SK-N-SH (cell line): ENCODE measurements at regions of chr10 and their contacts with region 1.

Region 1: GRCh38 chr10:118832241-118832651 is 77.5 kb upstream of the CACUL1 start:
- DNase-seq: peak; percentile 84
- H3K4me3 ChIP-seq: no peak overlapping the region
- H3K27ac ChIP-seq: peak overlapping the region in 1 of 2 experiments; percentile 80; a peak in 2 of 4 replicates
- H3K4me1 ChIP-seq: peaks cover 0 to 33% of the 10 kb centered on the region in 2 experiments; a peak in 1 of 4 replicates
- H3K27me3 ChIP-seq: no peaks in the 10 kb centered on the region
- CTCF ChIP-seq: no peak
- EP300 ChIP-seq: peak in 1 of 2 experiments; percentile 96; a peak in 2 of 4 replicates
- RAD21 ChIP-seq: 0 out of 2 replicates have a peak, but pooled peaks have one; percentile 32

Region 2: GRCh38 chr10:118754720-118755480 is 77.3 kb before region 1 on chr10 and contains the start of gene CACUL1:
- CTCF ChIA-PET with region 1: interaction called, 3 read pairs
- POLR2A ChIA-PET with region 1: interaction called, 15 read pairs
- DNase-seq: peak; percentile 100
- H3K4me3 ChIP-seq: peak within 1 kb of the TSS; percentile 86 to 91
- H3K27ac ChIP-seq: peak within 1 kb of the TSS; percentile 67 to 88
- H3K4me1 ChIP-seq: peaks cover 13 to 18% of the 10 kb centered on the region in 2 experiments; a peak in 3 of 4 replicates
- H3K27me3 ChIP-seq: no peaks in the 10 kb centered on the region
- CTCF ChIP-seq: no peak
- EP300 ChIP-seq: 0 out of 4 replicates have a peak, but pooled peaks of 1 of the 2 experiments have one; percentile 2
- RAD21 ChIP-seq: no peak
- polyA plus RNA-seq, gene CACUL1: 2.6 and 3.9 TPM in 2 replicates

Region 3: GRCh38 chr10:118850418-118851061 is 18.3 kb after region 1 on chr10:
- CTCF ChIA-PET with region 1: interaction called, 12 read pairs
- POLR2A ChIA-PET with region 1: no interaction called
- DNase-seq: peak; percentile 69
- H3K4me3 ChIP-seq: no peak overlapping the region
- H3K27ac ChIP-seq: no peak overlapping the region
- H3K4me1 ChIP-seq: no peaks in the 10 kb centered on the region
- H3K27me3 ChIP-seq: no peaks in the 10 kb centered on the region
- CTCF ChIP-seq: peak; percentile 64
- EP300 ChIP-seq: no peak
- RAD21 ChIP-seq: peak; percentile 72

Region 4: DNA sequence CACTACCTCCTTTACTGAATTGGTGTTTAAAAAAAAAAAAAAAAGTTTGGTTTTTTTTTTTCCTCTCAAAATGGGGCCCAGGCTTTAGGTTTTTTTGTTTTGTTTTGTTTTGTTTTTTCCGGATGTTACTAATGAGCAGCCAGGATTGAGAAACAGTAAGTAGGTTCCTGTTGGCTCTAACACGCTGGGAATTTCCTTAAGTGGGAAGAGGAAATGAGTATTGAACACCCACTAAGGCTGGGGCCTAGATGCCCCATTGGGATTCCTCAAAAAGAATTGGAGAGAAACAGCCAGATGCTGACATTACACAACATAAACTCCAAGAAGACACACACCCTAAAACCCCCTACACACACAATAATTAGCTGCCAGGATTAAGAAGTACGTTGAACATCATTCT is 95.1 kb after region 1 on chr10:
- CTCF ChIA-PET with region 1: no interaction called
- POLR2A ChIA-PET with region 1: no interaction called
- DNase-seq: no peak
- H3K4me3 ChIP-seq: no peak overlapping the region
- H3K27ac ChIP-seq: no peak overlapping the region
- H3K4me1 ChIP-seq: peaks cover 0 to 2% of the 10 kb centered on the region in 2 experiments; a peak in 1 of 4 replicates
- H3K27me3 ChIP-seq: no peaks in the 10 kb centered on the region
- CTCF ChIP-seq: no peak
- EP300 ChIP-seq: no peak
- RAD21 ChIP-seq: no peak